ENCODE measurements at regions of chr18 and their contacts with region 1.

Region 1: GRCh38 chr18:61282926-61283325 is 50.3 kb upstream of the CDH20 start:
- H3K4me3 Mint-ChIP-seq: no peak overlapping the region
- H3K27ac Mint-ChIP-seq: no peak overlapping the region
- H3K4me1 Mint-ChIP-seq: no peaks in the 10 kb centered on the region
- H3K27me3 Mint-ChIP-seq: no peaks in the 10 kb centered on the region

Region 2: GRCh38 chr18:60329131-60329530 is 953.8 kb before region 1 on chr18:
- intact Hi-C with region 1: loop called (anchors 5 kb)
- H3K4me3 Mint-ChIP-seq: no peak overlapping the region
- H3K27ac Mint-ChIP-seq: no peak overlapping the region
- H3K4me1 Mint-ChIP-seq: no peaks in the 10 kb centered on the region
- H3K27me3 Mint-ChIP-seq: no peaks in the 10 kb centered on the region

Region 3: GRCh38 chr18:61333746-61334490 is 51.0 kb after region 1 on chr18:
- intact Hi-C with region 1: no loop called
- H3K4me3 Mint-ChIP-seq: no peak overlapping the region
- H3K27ac Mint-ChIP-seq: no peak overlapping the region
- H3K4me1 Mint-ChIP-seq: no peaks in the 10 kb centered on the region
- H3K27me3 Mint-ChIP-seq: peaks cover 44% of the 10 kb centered on the region

Measured in dendritic cell treated with granulocyte-macrophage colony-stimulating factor and Interleukin-4, amounts not matched to agents 40 ng/mL and 50 ng/mL, for 4 days (primary cell).